Naive thymus-derived CD4-positive, alpha-beta T cell (primary cell): ENCODE measurements at regions of chr12 and their contacts with region 1.

Region 1: GRCh38 chr12:46382964-46383653 is 10.5 kb upstream of the SLC38A2 start:
- DNase-seq: peak; percentile 76 to 96 (median 90)
- ATAC-seq: peak; percentile 89
- H3K4me3 ChIP-seq: peak overlapping the region; percentile 61
- H3K4me3 Mint-ChIP-seq: peak overlapping the region; percentile 82 to 95 (median 91)
- H3K27ac ChIP-seq: peak overlapping the region; percentile 94
- H3K27ac Mint-ChIP-seq: peak overlapping the region; percentile 90 to 98 (median 97)
- H3K4me1 ChIP-seq: peaks cover 5 to 25% of the 10 kb centered on the region in 2 donors
- H3K4me1 Mint-ChIP-seq: peaks cover 24 to 53% (median 47%) of the 10 kb centered on the region in 7 donors
- H3K27me3 ChIP-seq: no peaks in the 10 kb centered on the region
- H3K27me3 Mint-ChIP-seq: no peaks in the 10 kb centered on the region

Region 2: GRCh38 chr12:46354111-46354798 is 28.9 kb before region 1 on chr12:
- CTCF ChIA-PET with region 1: no interaction called
- POLR2A ChIA-PET with region 1: interaction called, 5 read pairs
- intact Hi-C with region 1: loop called in 1 of 2 experiments (anchors 1 kb)
- DNase-seq: no peak
- ATAC-seq: peak; percentile 38
- H3K4me3 ChIP-seq: no peak overlapping the region
- H3K4me3 Mint-ChIP-seq: no peak overlapping the region
- H3K27ac ChIP-seq: no peak overlapping the region
- H3K27ac Mint-ChIP-seq: peak overlapping the region in 4 of 9 donors; percentile 29 to 75 (median 54)
- H3K4me1 ChIP-seq: peaks cover 0 to 7% of the 10 kb centered on the region in 2 donors
- H3K4me1 Mint-ChIP-seq: peaks cover 6 to 32% (median 15%) of the 10 kb centered on the region in 7 donors
- H3K27me3 ChIP-seq: no peaks in the 10 kb centered on the region
- H3K27me3 Mint-ChIP-seq: no peaks in the 10 kb centered on the region

Region 3: GRCh38 chr12:46395388-46395787 is 12.3 kb after region 1 on chr12:
- CTCF ChIA-PET with region 1: no interaction called
- POLR2A ChIA-PET with region 1: interaction called, 8 read pairs
- intact Hi-C with region 1: loop called (anchors 1 kb)
- DNase-seq: no peak
- ATAC-seq: no peak
- H3K4me3 ChIP-seq: no peak overlapping the region
- H3K4me3 Mint-ChIP-seq: no peak overlapping the region
- H3K27ac ChIP-seq: no peak overlapping the region
- H3K27ac Mint-ChIP-seq: no peak overlapping the region
- H3K4me1 ChIP-seq: no peaks in the 10 kb centered on the region
- H3K4me1 Mint-ChIP-seq: peaks cover 10 to 41% (median 29%) of the 10 kb centered on the region in 7 donors
- H3K27me3 ChIP-seq: no peaks in the 10 kb centered on the region
- H3K27me3 Mint-ChIP-seq: no peaks in the 10 kb centered on the region

Region 4: DNA sequence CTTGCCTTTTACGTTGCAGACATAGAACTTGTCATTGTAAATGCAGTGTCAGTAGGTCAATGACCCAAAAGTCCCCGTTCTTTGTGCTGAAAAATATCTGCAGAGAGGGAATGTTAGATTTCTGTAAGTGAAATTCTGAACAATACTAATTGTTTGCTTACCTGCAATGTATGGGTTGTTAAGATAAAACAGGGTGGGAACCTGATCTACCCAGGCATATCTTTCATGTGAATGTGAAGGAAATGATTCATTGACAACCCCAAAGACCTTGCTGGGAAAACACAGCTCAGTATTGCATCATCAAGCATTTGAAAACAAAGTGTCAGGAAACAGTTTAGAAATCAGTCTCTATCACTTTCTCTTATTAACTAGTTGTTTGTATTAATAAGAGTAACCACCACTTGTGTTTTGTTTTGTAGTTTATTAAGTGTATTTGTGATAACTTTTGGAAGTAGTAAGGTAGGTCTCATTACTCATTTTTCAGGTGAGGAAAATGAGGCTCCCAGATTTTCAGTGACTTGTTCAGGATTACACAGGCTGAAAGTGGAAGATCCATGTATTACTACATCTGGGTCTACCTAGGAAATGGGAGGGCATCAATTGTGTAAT is 47.3 kb after region 1 on chr12:
- CTCF ChIA-PET with region 1: no interaction called
- POLR2A ChIA-PET with region 1: no interaction called
- intact Hi-C with region 1: loop called in 1 of 2 experiments (anchors 1 kb)
- DNase-seq: peak in 4 of 9 donors; percentile 5 to 44 (median 28)
- ATAC-seq: peak; percentile 60
- H3K4me3 ChIP-seq: no peak overlapping the region
- H3K4me3 Mint-ChIP-seq: peak overlapping the region in 3 of 10 donors; percentile 36 to 70 (median 69)
- H3K27ac ChIP-seq: no peak overlapping the region
- H3K27ac Mint-ChIP-seq: peak overlapping the region in 8 of 9 donors; percentile 19 to 91 (median 75)
- H3K4me1 ChIP-seq: peaks cover 0 to 4% of the 10 kb centered on the region in 2 donors
- H3K4me1 Mint-ChIP-seq: peaks cover 1 to 28% (median 16%) of the 10 kb centered on the region in 7 donors
- H3K27me3 ChIP-seq: no peaks in the 10 kb centered on the region
- H3K27me3 Mint-ChIP-seq: no peaks in the 10 kb centered on the region

Region 5: DNA sequence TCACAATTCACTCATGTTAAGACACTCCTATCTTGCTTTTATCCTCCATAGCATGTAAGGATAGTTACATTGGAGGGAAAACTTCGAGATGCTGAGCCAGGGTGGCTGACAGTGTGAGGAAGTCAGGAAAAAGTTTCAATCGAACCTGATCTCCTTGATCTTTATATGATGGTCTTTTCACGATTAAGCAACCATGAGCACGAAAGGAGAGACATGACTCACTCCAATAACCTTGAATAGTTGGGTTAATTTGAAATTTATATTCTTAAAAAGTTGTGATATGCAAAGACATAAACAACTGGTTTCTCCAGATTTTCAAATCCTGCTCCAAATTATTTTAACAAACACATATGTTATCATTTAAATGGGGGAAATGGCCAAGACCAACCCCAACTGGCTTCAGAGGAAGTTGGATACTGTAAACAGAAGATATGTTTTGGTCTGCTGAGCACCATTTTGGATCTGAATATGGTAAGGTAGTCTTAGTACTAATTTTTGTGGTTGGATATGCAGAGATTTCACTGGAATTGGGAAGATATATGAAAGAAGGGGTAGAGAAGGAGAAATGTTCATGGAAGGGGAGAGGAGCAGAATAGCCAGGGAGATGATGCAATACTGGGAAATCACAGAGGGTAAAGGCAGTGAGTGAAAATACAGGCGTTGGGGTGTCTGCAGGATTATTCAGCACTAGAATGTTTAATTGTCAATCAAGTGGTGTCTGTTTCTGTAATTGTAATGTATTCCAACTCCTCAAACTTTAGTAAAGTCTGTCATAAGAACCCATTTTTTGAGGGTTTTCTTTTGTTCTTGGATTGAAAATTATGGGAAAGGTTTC is 174.6 kb after region 1 on chr12:
- CTCF ChIA-PET with region 1: no interaction called
- POLR2A ChIA-PET with region 1: no interaction called
- intact Hi-C with region 1: no loop called
- DNase-seq: no peak
- ATAC-seq: no peak
- H3K4me3 ChIP-seq: no peak overlapping the region
- H3K4me3 Mint-ChIP-seq: no peak overlapping the region
- H3K27ac ChIP-seq: no peak overlapping the region
- H3K27ac Mint-ChIP-seq: no peak overlapping the region
- H3K4me1 ChIP-seq: no peaks in the 10 kb centered on the region
- H3K4me1 Mint-ChIP-seq: peaks cover 0 to 36% (median 5%) of the 10 kb centered on the region in 7 donors
- H3K27me3 ChIP-seq: no peaks in the 10 kb centered on the region
- H3K27me3 Mint-ChIP-seq: no peaks in the 10 kb centered on the region